ENCODE measurements at regions of chr20 and their contacts with region 1.

Region 1: GRCh38 chr20:61868466-61869090 is 197.1 kb downstream of the TAF4 start:
- DNase-seq: no peak
- ATAC-seq: no peak
- H3K4me3 ChIP-seq: no peak overlapping the region
- H3K27ac ChIP-seq: no peak overlapping the region
- H3K4me1 ChIP-seq: no peaks in the 10 kb centered on the region
- CTCF ChIP-seq: no peak
- EP300 ChIP-seq: no peak
- POLR2A ChIP-seq: no peak
- RAD21 ChIP-seq: no peak

Region 2: GRCh38 chr20:61857414-61857775 is 11.2 kb before region 1 on chr20:
- CTCF ChIA-PET with region 1: no interaction called
- POLR2A ChIA-PET with region 1: no interaction called
- DNase-seq: no peak
- ATAC-seq: no peak
- H3K4me3 ChIP-seq: no peak overlapping the region
- H3K27ac ChIP-seq: no peak overlapping the region
- H3K4me1 ChIP-seq: no peaks in the 10 kb centered on the region
- CTCF ChIP-seq: no peak
- EP300 ChIP-seq: no peak
- POLR2A ChIP-seq: no peak
- RAD21 ChIP-seq: no peak

Region 3: GRCh38 chr20:61886721-61887594 is 18.4 kb after region 1 on chr20:
- CTCF ChIA-PET with region 1: interaction called, 27 read pairs
- POLR2A ChIA-PET with region 1: no interaction called
- DNase-seq: peak; percentile 45 to 57
- ATAC-seq: peak; percentile 77 to 90; a peak in 5 of 6 replicates
- H3K4me3 ChIP-seq: no peak overlapping the region
- H3K27ac ChIP-seq: no peak overlapping the region
- H3K4me1 ChIP-seq: no peaks in the 10 kb centered on the region
- CTCF ChIP-seq: peak; percentile 71
- EP300 ChIP-seq: no peak
- POLR2A ChIP-seq: no peak
- RAD21 ChIP-seq: peak; percentile 70 to 74

Region 4: DNA sequence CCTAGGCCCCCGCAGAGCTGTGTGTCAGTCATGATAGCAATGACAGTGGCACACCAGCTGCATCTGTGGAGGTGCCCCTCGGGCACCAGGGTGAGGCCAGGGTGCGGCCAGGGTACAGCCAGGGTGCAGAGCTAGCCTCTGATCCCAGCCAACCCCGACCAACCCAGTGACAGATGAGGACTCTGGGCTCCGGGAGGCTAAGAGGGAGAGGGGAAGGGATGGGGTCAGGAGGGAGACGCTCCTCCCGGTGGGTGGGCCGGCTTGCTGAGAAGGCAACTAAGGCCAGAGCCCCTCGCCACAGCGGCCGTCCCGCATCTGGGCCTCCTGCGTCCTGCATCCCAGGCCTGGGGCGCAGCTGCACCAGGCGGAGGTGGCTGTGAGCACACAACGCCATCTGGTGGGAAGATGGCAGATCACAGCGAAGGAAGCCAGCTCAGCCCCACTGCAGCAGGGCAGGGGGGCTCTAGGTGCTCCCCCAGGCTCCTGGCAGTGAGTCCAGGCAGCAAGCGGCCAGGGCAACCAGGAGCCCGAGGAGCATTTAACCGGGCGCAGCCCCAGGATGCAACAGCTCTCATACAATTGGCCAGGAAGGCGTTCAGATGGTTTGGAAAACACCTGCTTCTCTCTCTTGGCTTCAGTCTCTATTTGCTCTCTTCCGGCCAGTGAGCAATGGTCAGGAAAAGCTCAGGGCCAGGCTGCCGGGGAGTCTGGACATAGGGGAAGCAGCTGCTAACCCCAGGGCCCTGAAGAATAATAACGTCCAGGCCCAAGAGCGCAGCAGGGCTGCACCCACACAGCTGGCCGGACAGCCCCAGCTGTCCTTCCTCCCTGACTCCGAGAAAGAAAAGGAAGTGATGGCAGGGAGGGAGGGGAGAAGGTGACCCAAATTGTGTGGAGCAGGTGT is 27.7 kb after region 1 on chr20:
- CTCF ChIA-PET with region 1: interaction called, 13 read pairs
- POLR2A ChIA-PET with region 1: no interaction called
- DNase-seq: peak; percentile 32 to 79
- ATAC-seq: peak; percentile 80 to 94
- H3K4me3 ChIP-seq: no peak overlapping the region
- H3K27ac ChIP-seq: no peak overlapping the region
- H3K4me1 ChIP-seq: no peaks in the 10 kb centered on the region
- CTCF ChIP-seq: peak; percentile 71
- EP300 ChIP-seq: no peak
- POLR2A ChIP-seq: no peak
- RAD21 ChIP-seq: peak; percentile 76 to 80

Measured in A549 (cell line).